Gastrocnemius medialis (tissue), 4 donors: ENCODE measurements at regions of chr20 and their contacts with region 1.

Region 1: GRCh38 chr20:63864847-63865640 is at the start of gene TPD52L2:
- DNase-seq: peak; percentile 99
- ATAC-seq: peak; percentile 94 to 99
- H3K4me3 ChIP-seq: peak within 1 kb of the TSS; percentile 86 to 99 (median 90)
- H3K27ac ChIP-seq: peak within 1 kb of the TSS; percentile 97 to 99 (median 98)
- H3K4me1 ChIP-seq: peaks cover 25 to 27% of the 10 kb centered on the region in 2 donors
- H3K27me3 ChIP-seq: no peaks in the 10 kb centered on the region
- CTCF ChIP-seq: no peak
- POLR2A ChIP-seq: peak; percentile 98 to 99
- total RNA-seq, gene TPD52L2: 57.7 to 92.4 (median 59.8) TPM

Region 2: GRCh38 chr20:63657937-63658748 is 206.9 kb before region 1 on chr20 and contains the start of gene RTEL1:
- in situ Hi-C with region 1: no loop called
- intact Hi-C with region 1: loop called (anchors 1 kb)
- DNase-seq: peak; percentile 82 to 88
- ATAC-seq: peak; percentile 96 to 97
- H3K4me3 ChIP-seq: peak within 1 kb of the TSS; percentile 78 to 94 (median 89)
- H3K27ac ChIP-seq: peak within 1 kb of the TSS; percentile 91 to 96 (median 92)
- H3K4me1 ChIP-seq: peaks cover 19 to 28% of the 10 kb centered on the region in 2 donors
- H3K27me3 ChIP-seq: peaks cover 0 to 3% (median 0%) of the 10 kb centered on the region in 3 donors
- CTCF ChIP-seq: peak in 2 of 5 experiments; percentile 10 to 24
- POLR2A ChIP-seq: peak; percentile 18 to 34
- total RNA-seq, gene RTEL1: 2.4 to 9.1 (median 6.0) TPM

Region 3: DNA sequence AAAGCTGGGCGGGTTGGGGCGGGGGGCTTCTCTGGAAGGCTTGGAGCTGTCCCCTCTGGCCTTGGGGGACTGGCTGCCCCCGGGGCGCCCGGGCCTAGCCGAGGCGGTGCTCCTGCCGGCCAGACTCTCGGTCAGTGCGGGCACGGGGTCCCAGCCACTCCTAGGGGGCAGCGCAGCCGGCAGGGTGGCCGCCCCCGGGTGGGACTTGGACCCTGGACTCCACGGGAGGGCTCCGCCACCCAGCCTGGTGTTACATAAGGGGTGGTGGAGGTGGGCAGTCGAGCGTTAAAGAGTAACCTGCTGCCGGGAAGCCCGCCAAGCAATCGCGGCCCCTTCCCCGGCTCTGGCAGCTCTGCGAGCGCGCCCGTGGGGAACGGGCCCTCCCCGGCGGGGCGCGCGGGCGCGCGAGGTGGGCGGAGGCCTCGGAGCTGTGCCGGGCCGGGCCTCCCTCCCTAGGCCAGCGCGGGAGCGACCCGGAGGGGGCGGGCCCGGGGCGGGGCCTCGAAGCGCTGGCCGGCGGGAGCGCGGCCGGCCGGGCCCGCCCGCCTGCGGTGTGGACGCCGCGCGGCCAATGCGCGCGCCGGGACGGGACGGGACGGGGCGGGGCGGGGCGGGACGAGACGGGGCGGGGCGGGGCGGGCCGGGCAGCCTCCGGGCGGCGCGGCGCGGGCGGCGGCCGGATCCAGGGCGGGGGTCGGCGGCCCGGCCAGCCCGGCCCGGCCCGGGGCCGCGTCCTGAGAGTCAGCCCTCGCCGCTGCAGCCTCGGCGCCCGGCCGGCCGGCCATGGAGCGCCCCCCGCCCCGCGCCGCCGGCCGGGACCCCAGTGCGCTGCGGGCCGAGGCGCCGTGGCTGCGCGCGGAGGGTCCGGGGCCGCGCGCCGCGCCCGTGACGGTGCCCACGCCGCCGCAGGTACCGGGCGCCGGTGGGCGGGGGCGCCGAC is 125.6 kb before region 1 on chr20 and contains the start of gene SLC2A4RG:
- in situ Hi-C with region 1: no loop called
- intact Hi-C with region 1: loop called (anchors 2 kb)
- DNase-seq: peak; percentile 54 to 72
- ATAC-seq: peak; percentile 59 to 67
- H3K4me3 ChIP-seq: peak within 1 kb of the TSS; percentile 58 to 91 (median 74)
- H3K27ac ChIP-seq: peak within 1 kb of the TSS; percentile 95 to 99 (median 97)
- H3K4me1 ChIP-seq: peaks cover 17 to 32% of the 10 kb centered on the region in 2 donors
- H3K27me3 ChIP-seq: no peaks in the 10 kb centered on the region
- CTCF ChIP-seq: no peak
- POLR2A ChIP-seq: peak; percentile 32 to 33
- total RNA-seq, gene SLC2A4RG: 26.0 to 58.7 (median 39.1) TPM

Region 4: DNA sequence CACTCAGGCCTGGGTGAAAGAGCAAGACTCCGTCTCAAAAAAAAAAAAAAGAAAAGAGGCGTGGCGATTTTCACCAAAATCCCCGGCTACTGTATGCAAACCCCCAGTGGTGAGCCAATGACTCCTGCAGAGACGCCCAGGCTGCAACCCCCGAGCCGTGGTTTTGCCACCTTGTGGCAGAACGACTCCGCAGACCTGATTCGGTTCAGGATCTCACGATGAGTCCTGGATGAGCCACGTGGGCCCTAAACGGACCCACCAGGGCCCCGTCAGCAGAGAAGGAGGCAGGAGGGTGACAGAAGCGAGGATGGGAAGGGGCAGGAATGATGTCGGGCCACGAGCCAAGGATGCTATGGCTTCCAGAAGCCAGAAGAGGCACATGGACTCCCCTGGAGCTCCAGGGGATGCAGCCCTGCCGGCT is 83.0 kb before region 1 on chr20:
- in situ Hi-C with region 1: loop called in 1 of 4 experiments (anchors 10 kb)
- intact Hi-C with region 1: loop called (anchors 2 kb)
- DNase-seq: no peak
- ATAC-seq: no peak
- H3K4me3 ChIP-seq: no peak overlapping the region
- H3K27ac ChIP-seq: no peak overlapping the region
- H3K4me1 ChIP-seq: peaks cover 0 to under 1% of the 10 kb centered on the region in 2 donors
- H3K27me3 ChIP-seq: no peaks in the 10 kb centered on the region
- CTCF ChIP-seq: no peak
- POLR2A ChIP-seq: no peak

Region 5: DNA sequence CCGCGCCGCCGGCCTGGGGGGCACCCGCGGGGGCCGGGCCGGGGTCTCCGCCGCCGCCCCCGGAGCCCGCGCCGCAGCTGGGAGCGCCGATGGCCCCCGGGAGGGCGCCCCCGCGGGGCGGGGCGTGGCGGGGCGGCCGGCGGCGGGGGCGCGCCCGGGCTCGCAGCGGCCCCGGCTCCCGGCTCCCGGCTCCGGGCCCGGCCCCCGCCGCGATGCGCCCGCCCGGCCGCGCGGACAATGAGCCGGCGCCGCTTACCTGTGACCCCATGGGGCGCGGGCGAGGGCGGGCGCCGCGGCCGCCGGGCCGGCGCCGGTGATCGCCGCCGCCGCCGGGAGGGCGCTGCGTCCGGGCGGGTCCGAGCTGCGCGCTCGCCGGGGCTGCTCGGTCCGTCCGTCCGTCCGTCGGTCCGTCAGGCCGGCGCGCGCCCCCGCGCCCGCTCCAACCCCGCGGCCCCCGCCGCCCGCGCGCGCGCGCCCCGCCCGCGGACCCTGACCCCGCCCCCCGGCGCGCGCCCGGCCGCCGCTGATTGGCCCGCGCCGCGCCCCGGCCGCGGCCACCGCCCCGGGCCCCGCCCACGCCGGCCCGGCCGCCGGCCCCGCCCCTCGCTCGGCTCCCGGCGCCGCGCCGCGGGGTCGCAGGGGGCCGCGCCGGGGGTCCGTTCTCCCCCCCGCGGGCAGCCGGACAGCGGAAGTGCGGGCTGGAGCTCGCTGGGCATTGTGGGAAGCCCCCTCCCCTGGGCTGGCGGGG is 34.0 kb before region 1 on chr20 and contains the start of gene ZBTB46:
- in situ Hi-C with region 1: no loop called
- intact Hi-C with region 1: loop called (anchors 2 kb)
- DNase-seq: no peak
- ATAC-seq: peak; percentile 74 to 82
- H3K4me3 ChIP-seq: peak within 1 kb of the TSS; percentile 55 to 71 (median 58)
- H3K27ac ChIP-seq: peak within 1 kb of the TSS; percentile 43 to 78 (median 66)
- H3K4me1 ChIP-seq: peaks cover 3 to 19% of the 10 kb centered on the region in 2 donors
- H3K27me3 ChIP-seq: peaks cover 0 to 6% (median 0%) of the 10 kb centered on the region in 3 donors
- CTCF ChIP-seq: no peak
- POLR2A ChIP-seq: no peak
- total RNA-seq, gene ZBTB46: 4.3 to 7.1 (median 5.6) TPM

Region 6: GRCh38 chr20:63894358-63895201 is 29.5 kb after region 1 on chr20 and contains the start of gene DNAJC5:
- in situ Hi-C with region 1: no loop called
- intact Hi-C with region 1: loop called (anchors 1 kb)
- DNase-seq: peak; percentile 91 to 94
- ATAC-seq: peak; percentile 90 to 92
- H3K4me3 ChIP-seq: peak within 1 kb of the TSS; percentile 63 to 66 (median 65)
- H3K27ac ChIP-seq: peak within 1 kb of the TSS; percentile 58 to 86 (median 78)
- H3K4me1 ChIP-seq: peaks cover 21 to 23% of the 10 kb centered on the region in 2 donors
- H3K27me3 ChIP-seq: no peaks in the 10 kb centered on the region
- CTCF ChIP-seq: no peak
- POLR2A ChIP-seq: peak; percentile 76 to 82
- total RNA-seq, gene DNAJC5: 18.5 to 26.4 (median 22.5) TPM